ENCODE measurements at regions of chr3 and their contacts with region 1.

Region 1: DNA sequence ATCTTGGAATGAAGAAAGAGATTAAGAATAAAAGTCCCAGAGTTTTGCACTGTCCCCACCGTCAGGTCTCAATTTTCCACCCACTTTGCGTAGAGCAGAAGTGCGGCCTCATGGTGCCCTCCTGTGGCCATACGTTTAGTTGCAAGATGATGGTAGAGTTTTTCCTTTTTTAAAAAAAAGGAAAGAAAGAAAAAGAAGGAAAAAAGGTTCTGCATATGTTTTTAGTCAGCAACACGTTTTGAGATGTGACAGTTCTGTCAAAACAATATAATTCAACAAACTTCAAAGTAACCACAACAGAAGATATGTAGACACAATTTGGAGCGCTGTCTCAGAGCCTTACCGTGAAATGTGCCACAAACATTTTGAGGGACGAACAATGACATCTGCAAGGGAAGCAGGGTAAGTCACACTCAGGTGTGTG is 24.6 kb downstream of the EBLN2 start:
- DNase-seq: peak; percentile 42
- H3K4me3 ChIP-seq: no peak overlapping the region
- H3K27ac ChIP-seq: no peak overlapping the region
- H3K4me1 ChIP-seq: no peaks in the 10 kb centered on the region
- CTCF ChIP-seq: peak; percentile 94

Region 2: DNA sequence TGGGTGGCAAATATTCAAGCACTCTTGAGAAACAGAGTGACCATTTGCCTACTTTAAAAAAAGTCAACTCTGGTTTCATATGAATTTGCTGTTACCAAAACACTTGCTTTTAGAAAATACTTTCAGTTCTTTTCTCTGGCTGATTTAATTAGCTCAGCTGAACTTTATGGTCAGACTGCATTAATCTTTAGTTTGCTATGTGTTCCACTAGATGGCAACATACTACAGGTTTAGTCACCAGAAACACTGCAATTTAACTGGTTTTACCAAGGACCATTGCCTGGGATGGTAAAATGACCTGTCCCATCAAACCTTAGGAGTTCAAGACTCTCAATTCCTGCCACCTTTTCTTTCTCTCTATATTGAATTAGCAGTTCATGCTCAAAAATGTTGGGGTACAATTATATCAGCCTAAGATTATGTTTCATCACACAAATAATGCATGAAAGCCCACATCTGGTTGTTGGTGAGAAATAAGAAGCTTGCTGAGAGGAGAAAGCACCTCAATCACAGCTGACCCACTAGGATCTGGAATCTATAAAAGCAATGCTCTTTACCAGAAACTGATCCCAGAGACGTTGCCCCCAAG is 1375.1 kb before region 1 on chr3:
- CTCF ChIA-PET with region 1: no interaction called
- POLR2A ChIA-PET with region 1: no interaction called
- intact Hi-C with region 1: loop called (anchors 5 kb)
- DNase-seq: peak; percentile 65
- H3K4me3 ChIP-seq: no peak overlapping the region
- H3K27ac ChIP-seq: no peak overlapping the region
- H3K4me1 ChIP-seq: no peaks in the 10 kb centered on the region
- CTCF ChIP-seq: peak; percentile 88

Region 3: DNA sequence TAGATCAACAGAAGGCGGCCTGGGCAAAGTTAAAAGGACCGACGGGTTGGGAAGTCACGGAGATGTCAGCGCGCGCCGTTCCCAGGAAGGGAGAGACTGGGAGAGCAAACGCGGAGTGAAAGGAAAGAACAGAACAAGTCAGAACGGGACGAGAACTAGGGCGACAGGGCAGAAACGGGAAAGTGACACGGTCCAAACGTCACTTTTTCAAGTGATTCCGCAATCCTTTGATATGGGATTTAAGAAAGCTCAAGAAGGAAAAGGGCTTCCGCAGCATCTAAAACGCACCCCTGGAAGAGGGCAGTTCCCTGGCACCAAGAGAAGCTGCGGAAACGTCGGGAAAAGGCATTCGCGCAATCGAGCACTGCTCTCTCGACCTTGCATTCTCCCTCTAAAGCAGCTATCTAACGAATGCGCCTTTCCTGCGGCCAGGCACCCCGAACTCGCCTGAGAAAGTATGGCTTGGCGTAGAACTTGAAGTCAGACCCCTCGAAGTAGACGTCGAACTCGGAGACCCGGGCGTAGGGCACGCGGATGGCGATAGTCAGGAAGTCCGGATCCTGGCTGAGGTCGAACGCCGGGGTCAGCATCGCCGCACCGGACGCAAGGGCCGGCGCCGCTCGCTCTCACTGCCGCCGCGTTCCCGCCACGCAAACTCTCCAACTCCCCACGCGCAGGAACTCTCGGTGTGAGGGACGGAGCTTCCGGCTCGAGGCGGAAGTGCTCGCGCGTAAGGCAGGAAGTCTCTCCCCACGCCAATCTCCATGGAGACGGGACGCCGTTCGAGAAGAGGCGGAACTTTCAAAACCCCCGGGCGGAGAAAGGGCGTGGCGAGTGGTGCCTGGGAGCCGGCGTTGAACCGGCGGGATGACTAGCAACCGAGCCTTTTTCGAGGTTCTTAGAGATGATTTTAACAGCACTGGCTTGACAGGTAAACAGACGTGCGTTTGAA is 238.1 kb before region 1 on chr3 and contains the start of gene SHQ1:
- CTCF ChIA-PET with region 1: interaction called, 3 read pairs
- POLR2A ChIA-PET with region 1: interaction called, 4 read pairs
- intact Hi-C with region 1: loop called (anchors 1 kb)
- DNase-seq: peak; percentile 96
- H3K4me3 ChIP-seq: peak within 1 kb of the TSS; percentile 83
- H3K27ac ChIP-seq: peak within 1 kb of the TSS; percentile 13
- H3K4me1 ChIP-seq: peaks cover 35% of the 10 kb centered on the region
- CTCF ChIP-seq: no peak
- total RNA-seq, gene SHQ1: 19.7 and 24.3 TPM in 2 replicates

Region 4: GRCh38 chr3:72938471-72939265 is 147.4 kb before region 1 on chr3:
- CTCF ChIA-PET with region 1: no interaction called
- POLR2A ChIA-PET with region 1: interaction called, 3 read pairs
- intact Hi-C with region 1: loop called (anchors 1 kb)
- DNase-seq: peak; percentile 59
- H3K4me3 ChIP-seq: no peak overlapping the region
- H3K27ac ChIP-seq: no peak overlapping the region
- H3K4me1 ChIP-seq: no peaks in the 10 kb centered on the region
- CTCF ChIP-seq: peak; percentile 81

Region 5: GRCh38 chr3:72977060-72977808 is 108.8 kb before region 1 on chr3:
- CTCF ChIA-PET with region 1: no interaction called
- POLR2A ChIA-PET with region 1: no interaction called
- intact Hi-C with region 1: no loop called
- DNase-seq: no peak
- H3K4me3 ChIP-seq: no peak overlapping the region
- H3K27ac ChIP-seq: no peak overlapping the region
- H3K4me1 ChIP-seq: no peaks in the 10 kb centered on the region
- CTCF ChIP-seq: peak; percentile 67

Measured in OCI-LY7 (cell line).